CD4-positive, alpha-beta memory T cell (primary cell): ENCODE measurements at regions of chr1 and their contacts with region 1.

Region 1: GRCh38 chr1:22052115-22053016 is at the start of gene CDC42:
- DNase-seq: peak; percentile 97 to 98 (median 98)
- H3K4me3 ChIP-seq: peak within 1 kb of the TSS; percentile 82 to 93
- H3K4me3 Mint-ChIP-seq: peak within 1 kb of the TSS; percentile 97 to 100 (median 99)
- H3K27ac ChIP-seq: peak within 1 kb of the TSS; percentile 98
- H3K27ac Mint-ChIP-seq: peak within 1 kb of the TSS; percentile 98 to 100 (median 100)
- H3K4me1 ChIP-seq: peaks cover 54% of the 10 kb centered on the region
- H3K4me1 Mint-ChIP-seq: peaks cover 34 to 75% (median 54%) of the 10 kb centered on the region in 4 donors
- H3K27me3 ChIP-seq: no peaks in the 10 kb centered on the region
- H3K27me3 Mint-ChIP-seq: no peaks in the 10 kb centered on the region
- total RNA-seq, gene CDC42: 195 to 202 TPM

Region 2: DNA sequence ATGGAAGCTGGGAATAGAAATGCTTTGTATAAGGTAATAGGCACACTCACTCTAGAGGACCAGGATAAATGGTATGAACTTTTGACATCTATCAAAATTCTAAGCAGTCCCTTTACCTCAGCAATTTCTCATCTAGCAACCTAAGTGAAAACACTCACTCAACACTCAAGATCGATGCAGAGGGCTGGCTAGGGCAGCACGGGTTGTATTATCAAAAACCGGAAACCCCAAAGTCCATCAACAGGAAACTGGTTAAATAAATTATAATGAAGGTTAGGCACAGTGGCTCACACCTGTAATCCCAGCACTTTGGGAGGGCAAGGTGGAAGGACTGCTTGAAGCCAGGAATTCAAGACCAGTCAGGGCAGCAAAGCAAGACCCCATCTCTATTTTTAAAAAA is 278.8 kb before region 1 on chr1:
- CTCF ChIA-PET with region 1: no interaction called
- POLR2A ChIA-PET with region 1: no interaction called
- intact Hi-C with region 1: no loop called
- DNase-seq: peak in 3 of 5 donors; percentile 22 to 28 (median 24)
- H3K4me3 ChIP-seq: no peak overlapping the region
- H3K4me3 Mint-ChIP-seq: peak overlapping the region in 7 of 8 donors; percentile 50 to 64 (median 61)
- H3K27ac ChIP-seq: no peak overlapping the region
- H3K27ac Mint-ChIP-seq: peak overlapping the region in 6 of 7 donors; percentile 46 to 91 (median 71)
- H3K4me1 ChIP-seq: peaks cover 72% of the 10 kb centered on the region
- H3K4me1 Mint-ChIP-seq: peaks cover 32 to 59% (median 45%) of the 10 kb centered on the region in 4 donors
- H3K27me3 ChIP-seq: no peaks in the 10 kb centered on the region
- H3K27me3 Mint-ChIP-seq: no peaks in the 10 kb centered on the region

Region 3: GRCh38 chr1:21861602-21862429 is 190.6 kb before region 1 on chr1:
- CTCF ChIA-PET with region 1: no interaction called
- POLR2A ChIA-PET with region 1: no interaction called
- intact Hi-C with region 1: no loop called
- DNase-seq: no peak
- H3K4me3 ChIP-seq: no peak overlapping the region
- H3K4me3 Mint-ChIP-seq: no peak overlapping the region
- H3K27ac ChIP-seq: no peak overlapping the region
- H3K27ac Mint-ChIP-seq: no peak overlapping the region
- H3K4me1 ChIP-seq: no peaks in the 10 kb centered on the region
- H3K4me1 Mint-ChIP-seq: peaks cover 0 to 2% (median 0%) of the 10 kb centered on the region in 4 donors
- H3K27me3 ChIP-seq: no peaks in the 10 kb centered on the region
- H3K27me3 Mint-ChIP-seq: no peaks in the 10 kb centered on the region

Region 4: GRCh38 chr1:22018583-22019559 is 33.5 kb before region 1 on chr1:
- CTCF ChIA-PET with region 1: interaction called, 57 read pairs
- POLR2A ChIA-PET with region 1: interaction called, 874 read pairs
- intact Hi-C with region 1: no loop called
- DNase-seq: peak; percentile 41 to 83 (median 67)
- H3K4me3 ChIP-seq: no peak overlapping the region
- H3K4me3 Mint-ChIP-seq: peak overlapping the region in 6 of 8 donors; percentile 54 to 80 (median 67)
- H3K27ac ChIP-seq: peak overlapping the region; percentile 51
- H3K27ac Mint-ChIP-seq: peak overlapping the region; percentile 65 to 98 (median 96)
- H3K4me1 ChIP-seq: peaks cover 37% of the 10 kb centered on the region
- H3K4me1 Mint-ChIP-seq: peaks cover 20 to 26% (median 23%) of the 10 kb centered on the region in 4 donors
- H3K27me3 ChIP-seq: no peaks in the 10 kb centered on the region
- H3K27me3 Mint-ChIP-seq: no peaks in the 10 kb centered on the region

Region 5: GRCh38 chr1:22064751-22065402 is 12.5 kb after region 1 on chr1:
- CTCF ChIA-PET with region 1: interaction called, 10 read pairs
- POLR2A ChIA-PET with region 1: interaction called, 36 read pairs
- intact Hi-C with region 1: no loop called
- DNase-seq: no peak
- H3K4me3 ChIP-seq: no peak overlapping the region
- H3K4me3 Mint-ChIP-seq: peak overlapping the region; percentile 26 to 80 (median 70)
- H3K27ac ChIP-seq: no peak overlapping the region
- H3K27ac Mint-ChIP-seq: peak overlapping the region; percentile 54 to 88 (median 71)
- H3K4me1 ChIP-seq: peaks cover 100% of the 10 kb centered on the region
- H3K4me1 Mint-ChIP-seq: peaks cover 66 to 93% (median 80%) of the 10 kb centered on the region in 4 donors
- H3K27me3 ChIP-seq: no peaks in the 10 kb centered on the region
- H3K27me3 Mint-ChIP-seq: no peaks in the 10 kb centered on the region

Region 6: DNA sequence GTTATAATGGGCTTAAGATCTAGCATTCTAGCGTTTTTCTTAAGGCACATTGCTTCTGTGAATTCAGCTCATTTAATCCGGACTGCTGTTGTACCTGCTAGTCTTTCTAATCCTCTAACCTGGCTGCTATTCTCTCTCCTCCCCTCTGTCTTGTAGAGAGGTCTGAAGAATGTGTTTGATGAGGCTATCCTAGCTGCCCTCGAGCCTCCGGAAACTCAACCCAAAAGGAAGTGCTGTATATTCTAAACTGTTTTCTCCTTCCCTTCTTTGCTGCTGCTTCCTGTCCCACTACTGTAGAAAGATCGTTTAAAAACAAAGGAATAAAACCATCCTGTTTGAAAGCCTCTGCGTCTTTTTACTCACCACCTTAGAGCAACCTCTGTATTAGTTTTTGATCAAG is 37.4 kb after region 1 on chr1:
- CTCF ChIA-PET with region 1: no interaction called
- POLR2A ChIA-PET with region 1: interaction called, 16 read pairs
- intact Hi-C with region 1: loop called (anchors 2 kb)
- DNase-seq: peak in 2 of 5 donors; percentile 12 to 15
- H3K4me3 ChIP-seq: peak overlapping the region in 1 of 2 donors; percentile 6
- H3K4me3 Mint-ChIP-seq: peak overlapping the region; percentile 55 to 83 (median 78)
- H3K27ac ChIP-seq: peak overlapping the region; percentile 22
- H3K27ac Mint-ChIP-seq: peak overlapping the region; percentile 76 to 83 (median 79)
- H3K4me1 ChIP-seq: peaks cover 86% of the 10 kb centered on the region
- H3K4me1 Mint-ChIP-seq: peaks cover 61 to 96% (median 78%) of the 10 kb centered on the region in 4 donors
- H3K27me3 ChIP-seq: no peaks in the 10 kb centered on the region
- H3K27me3 Mint-ChIP-seq: no peaks in the 10 kb centered on the region

Region 7: GRCh38 chr1:22105611-22106207 is 53.3 kb after region 1 on chr1:
- CTCF ChIA-PET with region 1: interaction called, 11 read pairs
- POLR2A ChIA-PET with region 1: interaction called, 25 read pairs
- intact Hi-C with region 1: loop called (anchors 2 kb)
- DNase-seq: peak; percentile 46 to 62 (median 50)
- H3K4me3 ChIP-seq: no peak overlapping the region
- H3K4me3 Mint-ChIP-seq: peak overlapping the region in 7 of 8 donors; percentile 19 to 86 (median 43)
- H3K27ac ChIP-seq: peak overlapping the region; percentile 30
- H3K27ac Mint-ChIP-seq: peak overlapping the region; percentile 70 to 92 (median 80)
- H3K4me1 ChIP-seq: peaks cover 57% of the 10 kb centered on the region
- H3K4me1 Mint-ChIP-seq: peaks cover 46 to 78% (median 60%) of the 10 kb centered on the region in 4 donors
- H3K27me3 ChIP-seq: no peaks in the 10 kb centered on the region
- H3K27me3 Mint-ChIP-seq: no peaks in the 10 kb centered on the region